ENCODE measurements at regions of chr22 and their contacts with region 1.

Region 1: GRCh38 chr22:17891481-17892167 is 117.4 kb upstream of the BID start:
- DNase-seq: peak; percentile 62
- H3K4me3 ChIP-seq: no peak overlapping the region
- H3K27ac ChIP-seq: no peak overlapping the region; a peak in 1 of 4 replicates
- H3K4me1 ChIP-seq: peaks cover 8 to 9% of the 10 kb centered on the region in 2 experiments; a peak in 3 of 4 replicates
- H3K27me3 ChIP-seq: no peaks in the 10 kb centered on the region
- CTCF ChIP-seq: peak; percentile 39
- EP300 ChIP-seq: no peak
- RAD21 ChIP-seq: peak; percentile 76

Region 2: DNA sequence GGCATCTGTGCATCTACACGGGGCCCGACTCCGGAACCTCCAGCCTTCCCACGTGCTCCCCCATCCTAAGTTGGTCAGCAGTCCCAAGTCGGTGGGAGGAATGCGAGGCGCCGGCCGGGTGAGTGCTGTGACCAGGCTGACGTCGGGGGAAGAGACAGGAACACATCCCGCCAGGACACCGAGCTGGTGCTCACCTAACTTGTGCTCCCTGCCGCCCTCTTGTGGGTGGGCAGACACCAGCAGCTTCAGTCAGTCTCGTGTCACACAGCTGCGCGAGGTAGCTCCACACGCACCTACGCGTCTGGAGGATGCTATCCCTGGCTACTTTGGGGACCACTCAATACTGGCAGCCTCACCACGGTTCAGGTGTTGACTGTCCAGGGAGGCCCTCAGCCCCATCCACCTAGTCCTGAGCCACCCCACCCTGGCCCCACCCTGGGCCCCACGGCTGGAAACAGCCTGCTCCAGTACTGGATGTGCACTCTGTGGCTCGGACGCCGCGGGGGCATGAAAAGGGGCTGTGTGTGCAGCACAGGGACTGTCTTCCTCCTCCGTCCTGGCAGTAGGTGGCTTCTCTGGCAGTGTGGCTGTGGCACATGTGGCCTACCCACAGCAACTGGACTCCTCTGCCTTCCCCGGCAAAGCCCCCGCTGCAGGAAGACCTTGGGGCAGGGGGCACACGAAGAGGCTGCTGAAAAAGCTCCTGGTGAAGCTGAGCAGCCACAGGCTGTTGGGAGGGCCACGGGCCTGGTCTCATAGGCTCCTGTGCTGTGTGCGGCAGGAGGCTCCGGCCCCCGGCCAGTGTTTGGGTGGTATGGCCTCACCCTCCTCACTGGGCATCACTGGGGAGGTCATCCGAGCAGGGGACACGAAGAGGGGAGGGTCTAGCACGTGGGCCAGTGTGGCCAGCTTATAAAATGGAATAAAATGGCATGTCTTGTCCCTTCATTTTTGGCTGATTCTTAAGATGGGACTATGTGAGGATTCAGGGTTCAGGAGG is 106.1 kb before region 1 on chr22:
- CTCF ChIA-PET with region 1: no interaction called
- POLR2A ChIA-PET with region 1: no interaction called
- DNase-seq: no peak
- H3K4me3 ChIP-seq: no peak overlapping the region; a peak in 1 of 4 replicates
- H3K27ac ChIP-seq: no peak overlapping the region
- H3K4me1 ChIP-seq: peaks cover 12 to 25% of the 10 kb centered on the region in 2 experiments; a peak in 3 of 4 replicates
- H3K27me3 ChIP-seq: no peaks in the 10 kb centered on the region
- CTCF ChIP-seq: peak; percentile 43
- EP300 ChIP-seq: no peak
- RAD21 ChIP-seq: peak; percentile 11; the same call in 1 of the 2 replicates

Region 3: DNA sequence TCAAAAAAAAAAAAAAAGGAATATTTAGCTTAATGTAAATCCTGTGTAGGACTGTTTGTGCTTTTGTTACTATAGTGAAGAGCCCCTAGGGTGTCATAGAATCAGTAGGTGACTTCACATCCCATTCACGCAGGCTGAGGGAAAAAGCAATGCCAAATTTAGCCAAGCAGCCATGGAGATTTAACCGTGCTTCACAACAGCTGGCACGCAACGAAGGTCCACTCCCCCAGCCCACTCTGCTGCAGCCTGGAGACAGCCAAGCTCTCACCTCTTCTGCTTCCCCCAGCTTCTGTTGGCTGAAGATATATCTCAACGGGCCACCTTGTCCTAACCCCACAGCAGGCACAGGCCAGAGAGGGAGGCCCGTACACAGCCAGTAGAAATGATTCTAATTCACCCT is 38.6 kb before region 1 on chr22:
- CTCF ChIA-PET with region 1: no interaction called
- POLR2A ChIA-PET with region 1: no interaction called
- DNase-seq: no peak
- H3K4me3 ChIP-seq: no peak overlapping the region
- H3K27ac ChIP-seq: no peak overlapping the region
- H3K4me1 ChIP-seq: peaks cover 0 to 3% of the 10 kb centered on the region in 2 experiments; a peak in 1 of 4 replicates
- H3K27me3 ChIP-seq: no peaks in the 10 kb centered on the region
- CTCF ChIP-seq: no peak
- EP300 ChIP-seq: no peak
- RAD21 ChIP-seq: no peak

Region 4: DNA sequence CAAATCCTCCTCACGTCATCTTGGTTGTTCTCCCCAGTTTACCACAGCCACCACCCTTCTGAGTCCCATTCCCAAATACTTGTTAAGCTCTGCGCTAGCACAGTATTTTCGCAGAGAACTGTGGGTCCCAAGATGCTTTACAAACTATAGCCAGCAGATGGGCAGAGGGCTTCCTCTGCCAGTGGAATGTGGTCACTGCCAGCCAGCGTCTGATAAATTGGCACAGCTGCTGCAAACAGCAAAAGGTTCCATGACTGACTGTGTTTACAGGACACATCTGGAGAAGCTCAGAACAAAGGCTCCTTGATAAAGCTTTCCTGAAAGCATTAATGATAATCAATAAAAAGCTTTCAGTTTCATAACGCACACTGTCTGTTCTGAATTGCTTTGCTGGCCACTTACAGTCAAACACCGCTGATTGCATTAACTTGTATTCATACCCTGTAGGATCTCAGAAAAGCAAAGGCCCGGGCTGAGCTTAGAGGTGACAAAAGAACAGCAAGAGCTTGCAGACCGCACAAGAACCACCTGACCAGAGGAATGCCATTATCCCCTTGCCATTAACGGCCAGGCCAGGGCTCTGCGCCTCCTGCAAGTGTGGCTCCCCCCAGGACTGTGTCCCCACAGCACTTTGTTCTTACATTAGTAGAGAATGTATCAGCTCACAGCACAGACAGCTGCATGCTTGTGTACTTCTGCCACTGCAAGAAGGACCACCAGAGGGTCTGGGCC is 12.1 kb after region 1 on chr22:
- CTCF ChIA-PET with region 1: interaction called, 18 read pairs
- POLR2A ChIA-PET with region 1: no interaction called
- DNase-seq: peak; percentile 49
- H3K4me3 ChIP-seq: no peak overlapping the region
- H3K27ac ChIP-seq: peak overlapping the region in 1 of 2 experiments; percentile 24; a peak in 1 of 4 replicates
- H3K4me1 ChIP-seq: peaks cover 0 to 20% of the 10 kb centered on the region in 2 experiments; a peak in 1 of 4 replicates
- H3K27me3 ChIP-seq: no peaks in the 10 kb centered on the region
- CTCF ChIP-seq: no peak
- EP300 ChIP-seq: no peak
- RAD21 ChIP-seq: peak; percentile 38; the same call in 1 of the 2 replicates

Region 5: DNA sequence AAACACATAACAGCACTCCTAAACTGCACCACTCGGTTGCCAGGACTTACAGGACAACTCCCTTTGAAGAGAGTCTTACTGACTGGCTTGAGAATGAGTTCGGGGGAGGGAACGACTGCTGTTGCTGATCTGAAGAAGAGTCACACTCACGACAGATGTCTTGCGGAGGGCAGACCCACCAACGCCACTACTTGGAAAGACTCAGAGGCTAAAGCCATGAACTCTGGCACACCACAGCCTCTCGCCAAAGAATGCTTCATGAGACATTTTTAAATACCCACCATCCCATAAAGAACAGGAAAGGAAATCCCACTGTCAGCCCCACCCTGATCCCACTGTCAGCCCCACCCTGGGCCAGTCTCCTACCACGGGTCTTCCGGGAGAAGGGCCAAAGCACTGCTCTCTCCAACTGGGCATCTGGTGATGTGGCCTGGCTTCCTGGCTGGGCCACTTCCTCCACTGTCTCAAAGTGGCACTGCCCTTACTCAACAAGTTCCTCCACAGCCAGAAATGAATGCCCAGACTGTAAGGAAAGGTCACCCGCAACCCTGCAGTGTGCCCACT is 59.1 kb after region 1 on chr22:
- CTCF ChIA-PET with region 1: no interaction called
- POLR2A ChIA-PET with region 1: no interaction called
- DNase-seq: no peak
- H3K4me3 ChIP-seq: no peak overlapping the region
- H3K27ac ChIP-seq: peak overlapping the region in 1 of 2 experiments; percentile 3; a peak in 2 of 4 replicates
- H3K4me1 ChIP-seq: peaks cover 9 to 39% of the 10 kb centered on the region in 2 experiments; a peak in 2 of 4 replicates
- H3K27me3 ChIP-seq: no peaks in the 10 kb centered on the region
- CTCF ChIP-seq: no peak
- EP300 ChIP-seq: no peak
- RAD21 ChIP-seq: no peak

Region 6: GRCh38 chr22:18133452-18133851 is 241.8 kb after region 1 on chr22:
- CTCF ChIA-PET with region 1: no interaction called
- POLR2A ChIA-PET with region 1: no interaction called
- DNase-seq: no peak
- H3K4me3 ChIP-seq: no peak overlapping the region
- H3K27ac ChIP-seq: no peak overlapping the region
- H3K4me1 ChIP-seq: no peaks in the 10 kb centered on the region
- H3K27me3 ChIP-seq: no peaks in the 10 kb centered on the region
- CTCF ChIP-seq: no peak
- EP300 ChIP-seq: no peak
- RAD21 ChIP-seq: no peak

Measured in SK-N-SH (cell line).